ENCODE measurements at regions of chr2 and their contacts with region 1.

Region 1: DNA sequence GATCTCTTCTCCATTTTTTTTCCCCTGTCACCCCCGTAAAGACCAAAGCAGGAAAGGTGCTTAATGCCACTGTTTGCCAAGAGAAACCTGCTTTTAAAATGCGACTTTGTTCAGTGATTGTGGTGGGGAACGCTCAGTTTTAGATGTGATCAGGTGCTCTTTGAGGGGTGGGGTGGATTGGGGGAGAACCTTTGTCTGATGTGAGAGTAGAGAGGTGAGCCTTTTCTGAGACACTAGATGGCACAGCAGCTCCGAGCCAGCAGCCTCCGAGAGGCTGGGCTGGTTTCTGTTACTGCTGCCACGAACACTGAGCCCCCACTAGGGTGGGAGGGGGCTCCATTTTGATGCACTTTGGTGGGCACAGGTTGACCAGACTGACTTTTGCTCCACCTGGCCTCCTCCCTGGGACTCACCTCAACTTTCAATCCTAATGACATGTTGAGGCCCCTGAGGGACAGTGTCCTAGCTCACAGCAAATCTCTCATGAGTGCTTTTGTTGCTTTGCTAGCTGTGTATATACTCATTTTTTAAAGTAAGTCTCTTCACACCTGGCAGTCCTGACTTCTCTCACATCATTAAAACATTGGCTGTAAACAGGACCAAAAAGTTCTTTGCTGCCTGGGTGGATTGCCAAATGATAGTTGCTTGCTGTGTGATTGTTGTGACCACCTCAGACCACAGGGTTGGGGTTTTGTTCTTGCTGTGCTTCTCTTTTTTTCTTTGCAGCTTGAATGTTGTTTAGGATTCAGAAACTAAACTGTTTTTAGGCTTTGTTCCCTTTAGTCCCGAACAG is 98.2 kb upstream of the MAP3K20 start:
- DNase-seq: no peak
- H3K4me3 ChIP-seq: no peak overlapping the region
- H3K27ac ChIP-seq: no peak overlapping the region
- H3K4me1 ChIP-seq: no peaks in the 10 kb centered on the region
- H3K27me3 ChIP-seq: no peaks in the 10 kb centered on the region
- CTCF ChIP-seq: peak in 1 of 4 experiments; percentile 44
- POLR2A ChIP-seq: no peak

Region 2: DNA sequence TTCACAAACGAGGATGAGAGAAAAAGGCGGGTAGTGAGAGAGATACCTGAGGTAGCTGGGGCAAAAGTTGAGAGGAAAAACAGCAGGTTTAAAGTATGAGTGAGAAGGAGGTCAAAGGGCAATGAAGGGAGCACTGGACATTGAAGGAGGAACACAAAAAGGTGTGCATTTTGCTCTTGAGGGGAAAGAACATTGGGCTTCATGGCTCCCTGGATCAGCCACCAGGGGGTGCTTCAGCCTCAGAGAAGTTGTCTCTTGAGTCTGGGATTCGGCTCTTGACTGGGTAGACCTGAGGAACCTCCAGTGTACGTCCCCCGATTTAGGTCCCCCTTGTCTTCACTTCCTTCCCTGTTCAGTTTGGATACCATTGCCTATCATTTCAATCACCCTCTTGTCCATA is 113.3 kb before region 1 on chr2:
- intact Hi-C with region 1: no loop called
- DNase-seq: peak; percentile 57
- H3K4me3 ChIP-seq: no peak overlapping the region
- H3K27ac ChIP-seq: no peak overlapping the region
- H3K4me1 ChIP-seq: peaks cover 4% of the 10 kb centered on the region
- H3K27me3 ChIP-seq: no peaks in the 10 kb centered on the region
- CTCF ChIP-seq: peak; percentile 33 to 86 (median 64)
- POLR2A ChIP-seq: no peak

Region 3: DNA sequence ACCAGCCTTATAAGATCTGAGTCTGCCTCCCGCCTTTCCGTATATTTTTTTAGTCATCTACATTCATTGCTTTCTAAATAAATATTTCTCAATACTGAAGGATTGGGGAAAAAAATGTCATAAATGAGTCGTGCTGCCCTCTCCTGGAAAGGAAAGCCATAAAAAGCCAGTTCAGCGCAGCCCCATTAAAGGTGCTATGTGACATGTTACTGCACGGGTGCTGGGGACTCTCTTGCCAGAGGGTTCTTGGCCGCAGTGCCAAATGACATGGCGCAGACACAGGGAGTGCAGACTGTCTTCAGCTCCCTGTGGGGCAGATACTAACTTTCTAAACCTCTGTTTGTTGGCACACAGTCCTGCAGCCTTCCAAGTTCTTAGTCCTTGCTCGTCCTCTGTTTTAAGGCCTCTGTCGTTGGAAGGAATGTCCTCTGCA is 44.5 kb after region 1 on chr2:
- intact Hi-C with region 1: loop called (anchors 5 kb)
- DNase-seq: no peak
- H3K4me3 ChIP-seq: no peak overlapping the region
- H3K27ac ChIP-seq: no peak overlapping the region
- H3K4me1 ChIP-seq: no peaks in the 10 kb centered on the region
- H3K27me3 ChIP-seq: no peaks in the 10 kb centered on the region
- CTCF ChIP-seq: peak in 3 of 4 experiments; percentile 3 to 49 (median 45)
- POLR2A ChIP-seq: no peak